MCF 10A (cell line): ENCODE measurements at regions of chr6 and their contacts with region 1.

Region 1: GRCh38 chr6:28586962-28587745 is 61.5 kb downstream of the GPX5 start:
- DNase-seq: peak; percentile 79
- H3K4me3 Mint-ChIP-seq: peak overlapping the region; percentile 95
- H3K27ac Mint-ChIP-seq: peak overlapping the region; percentile 92
- H3K4me1 Mint-ChIP-seq: peaks cover 30% of the 10 kb centered on the region
- H3K27me3 Mint-ChIP-seq: no peaks in the 10 kb centered on the region
- CTCF ChIP-seq: no peak

Region 2: GRCh38 chr6:27902335-27903314 is 684.5 kb before region 1 on chr6:
- CTCF ChIA-PET with region 1: no interaction called
- POLR2A ChIA-PET with region 1: no interaction called
- intact Hi-C with region 1: loop called (anchors 2 kb)
- DNase-seq: peak; percentile 89
- H3K4me3 Mint-ChIP-seq: peak overlapping the region; percentile 78
- H3K27ac Mint-ChIP-seq: peak overlapping the region; percentile 81
- H3K4me1 Mint-ChIP-seq: peaks cover 5% of the 10 kb centered on the region
- H3K27me3 Mint-ChIP-seq: no peaks in the 10 kb centered on the region
- CTCF ChIP-seq: no peak

Region 3: GRCh38 chr6:28330041-28330440 is 257.1 kb before region 1 on chr6:
- CTCF ChIA-PET with region 1: no interaction called
- POLR2A ChIA-PET with region 1: no interaction called
- intact Hi-C with region 1: no loop called
- DNase-seq: no peak
- H3K4me3 Mint-ChIP-seq: no peak overlapping the region
- H3K27ac Mint-ChIP-seq: no peak overlapping the region
- H3K4me1 Mint-ChIP-seq: no peaks in the 10 kb centered on the region
- H3K27me3 Mint-ChIP-seq: no peaks in the 10 kb centered on the region
- CTCF ChIP-seq: no peak

Region 4: GRCh38 chr6:28383235-28384142 is 203.7 kb before region 1 on chr6:
- CTCF ChIA-PET with region 1: interaction called, 4 read pairs
- POLR2A ChIA-PET with region 1: interaction called, 15 read pairs
- intact Hi-C with region 1: no loop called
- DNase-seq: peak; percentile 80
- H3K4me3 Mint-ChIP-seq: peak overlapping the region; percentile 82
- H3K27ac Mint-ChIP-seq: peak overlapping the region; percentile 96
- H3K4me1 Mint-ChIP-seq: peaks cover 14% of the 10 kb centered on the region
- H3K27me3 Mint-ChIP-seq: no peaks in the 10 kb centered on the region
- CTCF ChIP-seq: peak; percentile 48

Region 5: GRCh38 chr6:28496099-28496779 is 90.9 kb before region 1 on chr6:
- CTCF ChIA-PET with region 1: interaction called, 20 read pairs
- POLR2A ChIA-PET with region 1: interaction called, 5 read pairs
- intact Hi-C with region 1: no loop called
- DNase-seq: peak; percentile 6
- H3K4me3 Mint-ChIP-seq: no peak overlapping the region
- H3K27ac Mint-ChIP-seq: no peak overlapping the region
- H3K4me1 Mint-ChIP-seq: no peaks in the 10 kb centered on the region
- H3K27me3 Mint-ChIP-seq: no peaks in the 10 kb centered on the region
- CTCF ChIP-seq: no peak

Region 6: GRCh38 chr6:28542440-28543296 is 44.5 kb before region 1 on chr6:
- CTCF ChIA-PET with region 1: interaction called, 19 read pairs
- POLR2A ChIA-PET with region 1: interaction called, 12 read pairs
- intact Hi-C with region 1: loop called (anchors 1 kb)
- DNase-seq: peak; percentile 90
- H3K4me3 Mint-ChIP-seq: peak overlapping the region; percentile 85
- H3K27ac Mint-ChIP-seq: peak overlapping the region; percentile 85
- H3K4me1 Mint-ChIP-seq: peaks cover 7% of the 10 kb centered on the region
- H3K27me3 Mint-ChIP-seq: peaks cover 18% of the 10 kb centered on the region
- CTCF ChIP-seq: peak; percentile 45

Region 7: GRCh38 chr6:28606424-28607400 is 19.6 kb after region 1 on chr6:
- CTCF ChIA-PET with region 1: no interaction called
- POLR2A ChIA-PET with region 1: interaction called, 14 read pairs
- intact Hi-C with region 1: loop called (anchors 1 kb)
- DNase-seq: peak; percentile 78
- H3K4me3 Mint-ChIP-seq: peak overlapping the region; percentile 70
- H3K27ac Mint-ChIP-seq: peak overlapping the region; percentile 32
- H3K4me1 Mint-ChIP-seq: peaks cover 6% of the 10 kb centered on the region
- H3K27me3 Mint-ChIP-seq: no peaks in the 10 kb centered on the region
- CTCF ChIP-seq: peak; percentile 54

Region 8: DNA sequence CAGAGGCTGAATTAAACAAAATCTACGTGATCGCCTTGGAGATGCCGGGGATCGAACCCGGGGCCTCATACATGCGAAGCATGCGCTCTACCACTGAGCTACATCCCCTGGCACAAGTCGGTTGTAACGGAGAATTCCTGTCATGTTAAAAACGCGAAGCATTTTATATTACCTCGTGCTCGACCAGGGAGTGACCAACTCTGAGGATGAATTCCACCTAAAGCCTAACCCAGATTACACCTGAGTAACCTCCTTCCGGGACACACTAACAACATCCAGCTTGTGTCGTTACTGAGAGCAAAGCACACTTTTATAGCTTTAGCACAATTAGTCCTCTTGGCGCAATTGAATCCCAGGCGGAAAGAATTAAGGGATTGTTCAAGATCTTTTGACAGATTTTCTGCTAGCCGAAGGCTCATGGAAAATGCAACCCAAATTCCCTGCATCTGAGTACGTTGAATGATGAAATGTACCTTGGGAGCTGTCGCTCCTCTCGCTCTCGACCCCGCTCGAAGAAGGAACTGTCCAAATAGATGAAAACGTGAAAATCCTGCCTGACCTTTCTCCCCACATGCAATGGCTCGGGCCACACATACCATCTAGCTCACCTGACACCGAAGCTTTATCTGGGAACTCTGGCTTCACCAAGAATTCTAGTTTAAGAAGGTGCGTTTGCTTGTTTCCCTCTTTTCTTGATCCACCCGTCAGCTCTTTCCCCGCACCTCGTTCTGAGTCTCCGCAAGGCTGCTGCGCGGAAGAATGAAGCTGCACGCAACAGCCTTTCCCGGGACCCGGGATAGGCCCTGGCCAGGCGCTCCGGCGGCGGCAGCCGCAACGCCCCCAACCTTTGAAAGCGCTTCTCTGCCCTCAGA is 86.9 kb after region 1 on chr6:
- CTCF ChIA-PET with region 1: no interaction called
- POLR2A ChIA-PET with region 1: interaction called, 10 read pairs
- intact Hi-C with region 1: loop called (anchors 1 kb)
- DNase-seq: peak; percentile 75
- H3K4me3 Mint-ChIP-seq: peak overlapping the region; percentile 77
- H3K27ac Mint-ChIP-seq: no peak overlapping the region
- H3K4me1 Mint-ChIP-seq: peaks cover 13% of the 10 kb centered on the region
- H3K27me3 Mint-ChIP-seq: no peaks in the 10 kb centered on the region
- CTCF ChIP-seq: no peak